CD8-positive, alpha-beta memory T cell (primary cell): ENCODE measurements at regions of chr22 and their contacts with region 1.

Region 1: DNA sequence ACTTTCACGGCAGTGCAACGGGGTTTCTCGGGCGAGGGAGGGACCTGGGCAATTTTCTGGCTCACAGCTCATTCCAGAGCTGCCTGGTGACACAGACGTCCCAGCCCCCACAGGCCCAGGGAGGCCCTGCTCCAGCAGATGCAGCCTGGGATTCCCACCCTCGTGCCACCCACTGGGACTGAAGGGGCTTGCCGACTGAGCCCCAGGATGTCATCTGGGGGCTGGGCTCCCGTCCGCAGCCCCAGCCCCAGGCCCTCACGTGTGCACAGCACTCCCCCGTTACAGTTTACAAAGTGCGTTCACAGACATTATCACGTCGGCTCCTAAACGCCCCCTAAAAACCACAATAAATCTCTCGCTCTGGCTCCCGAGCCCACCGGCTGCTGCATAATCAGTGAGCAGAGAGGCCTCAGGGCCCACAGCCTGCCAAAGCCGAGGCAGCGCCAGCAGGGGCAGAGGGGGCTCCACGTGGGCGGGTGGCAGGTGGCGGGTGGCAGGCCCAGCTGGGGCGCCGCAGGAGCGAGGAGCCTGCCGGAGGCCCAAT is 76.9 kb upstream of the TCF20 start:
- DNase-seq: peak in 1 of 5 donors; percentile 23
- H3K4me3 ChIP-seq: no peak overlapping the region
- H3K4me3 Mint-ChIP-seq: no peak overlapping the region
- H3K27ac ChIP-seq: no peak overlapping the region
- H3K27ac Mint-ChIP-seq: no peak overlapping the region
- H3K4me1 ChIP-seq: no peaks in the 10 kb centered on the region
- H3K4me1 Mint-ChIP-seq: peaks cover 3 to 6% (median 5%) of the 10 kb centered on the region in 3 donors
- H3K27me3 ChIP-seq: no peaks in the 10 kb centered on the region
- H3K27me3 Mint-ChIP-seq: peaks cover 2 to 3% of the 10 kb centered on the region in 2 donors

Region 2: DNA sequence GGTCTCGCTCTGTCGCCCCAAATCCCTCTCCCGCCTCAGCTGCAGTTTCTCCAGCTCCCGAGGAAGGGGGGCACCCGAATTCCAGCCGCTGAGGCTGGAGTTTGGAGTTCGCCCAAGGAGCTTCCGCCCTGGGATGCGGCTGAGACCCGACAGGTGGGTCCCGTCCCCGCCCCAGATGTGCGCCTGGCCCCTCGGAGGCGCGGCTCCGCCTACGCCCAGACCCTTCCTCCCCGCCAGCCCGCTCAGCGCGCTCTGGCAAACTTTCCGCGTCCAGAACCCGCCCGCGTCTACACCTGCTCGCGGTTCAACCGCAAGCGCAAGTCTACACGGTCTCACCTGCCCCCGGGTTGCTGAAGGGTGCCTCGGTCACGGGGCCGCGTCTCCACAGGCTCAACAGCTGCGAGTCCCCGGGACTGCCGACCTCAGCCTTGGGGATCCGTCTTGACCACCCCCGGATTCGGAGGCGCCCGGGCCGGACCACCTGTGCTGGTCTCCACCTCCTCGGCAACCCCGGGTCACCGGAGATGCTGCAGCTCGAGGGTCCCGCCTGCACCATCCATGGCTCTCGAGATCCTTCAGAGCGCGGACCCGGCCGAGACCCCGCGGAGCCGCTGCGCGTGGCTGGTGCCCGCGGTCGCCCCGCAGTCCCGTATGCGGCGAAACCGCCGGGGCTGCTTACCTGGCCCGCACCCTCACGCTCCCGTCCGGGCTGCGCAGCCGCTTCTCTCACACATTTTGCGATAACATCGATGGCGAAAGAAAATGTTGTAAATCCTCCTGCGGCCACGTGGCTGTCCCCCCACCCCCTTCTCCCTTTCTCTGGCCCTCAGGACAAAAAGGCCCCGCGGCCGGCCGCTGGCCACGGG is 21.3 kb after region 1 on chr22:
- CTCF ChIA-PET with region 1: no interaction called
- POLR2A ChIA-PET with region 1: no interaction called
- DNase-seq: peak; percentile 6 to 55 (median 42)
- H3K4me3 ChIP-seq: peak overlapping the region; percentile 97
- H3K4me3 Mint-ChIP-seq: peak overlapping the region; percentile 69 to 95 (median 88)
- H3K27ac ChIP-seq: no peak overlapping the region
- H3K27ac Mint-ChIP-seq: peak overlapping the region in 1 of 8 donors; percentile 70
- H3K4me1 ChIP-seq: peaks cover 18% of the 10 kb centered on the region
- H3K4me1 Mint-ChIP-seq: peaks cover 11 to 26% (median 15%) of the 10 kb centered on the region in 3 donors
- H3K27me3 ChIP-seq: peaks cover 15% of the 10 kb centered on the region
- H3K27me3 Mint-ChIP-seq: peaks cover 28 to 31% of the 10 kb centered on the region in 2 donors

Region 3: GRCh38 chr22:42419243-42419881 is 72.0 kb after region 1 on chr22:
- CTCF ChIA-PET with region 1: no interaction called
- POLR2A ChIA-PET with region 1: interaction called, 10 read pairs
- DNase-seq: no peak
- H3K4me3 ChIP-seq: no peak overlapping the region
- H3K4me3 Mint-ChIP-seq: no peak overlapping the region
- H3K27ac ChIP-seq: no peak overlapping the region
- H3K27ac Mint-ChIP-seq: peak overlapping the region in 1 of 8 donors; percentile 24
- H3K4me1 ChIP-seq: no peaks in the 10 kb centered on the region
- H3K4me1 Mint-ChIP-seq: peaks cover 0 to 3% (median 0%) of the 10 kb centered on the region in 3 donors
- H3K27me3 ChIP-seq: no peaks in the 10 kb centered on the region
- H3K27me3 Mint-ChIP-seq: peaks cover 4 to 24% of the 10 kb centered on the region in 2 donors

Region 4: GRCh38 chr22:42437488-42438292 is 90.3 kb after region 1 on chr22:
- CTCF ChIA-PET with region 1: no interaction called
- POLR2A ChIA-PET with region 1: no interaction called
- DNase-seq: peak; percentile 76 to 90 (median 81)
- H3K4me3 ChIP-seq: peak overlapping the region; percentile 73
- H3K4me3 Mint-ChIP-seq: peak overlapping the region; percentile 69 to 93 (median 82)
- H3K27ac ChIP-seq: peak overlapping the region; percentile 38
- H3K27ac Mint-ChIP-seq: peak overlapping the region in 5 of 8 donors; percentile 54 to 73 (median 63)
- H3K4me1 ChIP-seq: peaks cover 9% of the 10 kb centered on the region
- H3K4me1 Mint-ChIP-seq: peaks cover 4 to 12% (median 8%) of the 10 kb centered on the region in 3 donors
- H3K27me3 ChIP-seq: no peaks in the 10 kb centered on the region
- H3K27me3 Mint-ChIP-seq: peaks cover 2 to 6% of the 10 kb centered on the region in 2 donors